ENCODE measurements at regions of chr16 and their contacts with region 1.

Region 1: DNA sequence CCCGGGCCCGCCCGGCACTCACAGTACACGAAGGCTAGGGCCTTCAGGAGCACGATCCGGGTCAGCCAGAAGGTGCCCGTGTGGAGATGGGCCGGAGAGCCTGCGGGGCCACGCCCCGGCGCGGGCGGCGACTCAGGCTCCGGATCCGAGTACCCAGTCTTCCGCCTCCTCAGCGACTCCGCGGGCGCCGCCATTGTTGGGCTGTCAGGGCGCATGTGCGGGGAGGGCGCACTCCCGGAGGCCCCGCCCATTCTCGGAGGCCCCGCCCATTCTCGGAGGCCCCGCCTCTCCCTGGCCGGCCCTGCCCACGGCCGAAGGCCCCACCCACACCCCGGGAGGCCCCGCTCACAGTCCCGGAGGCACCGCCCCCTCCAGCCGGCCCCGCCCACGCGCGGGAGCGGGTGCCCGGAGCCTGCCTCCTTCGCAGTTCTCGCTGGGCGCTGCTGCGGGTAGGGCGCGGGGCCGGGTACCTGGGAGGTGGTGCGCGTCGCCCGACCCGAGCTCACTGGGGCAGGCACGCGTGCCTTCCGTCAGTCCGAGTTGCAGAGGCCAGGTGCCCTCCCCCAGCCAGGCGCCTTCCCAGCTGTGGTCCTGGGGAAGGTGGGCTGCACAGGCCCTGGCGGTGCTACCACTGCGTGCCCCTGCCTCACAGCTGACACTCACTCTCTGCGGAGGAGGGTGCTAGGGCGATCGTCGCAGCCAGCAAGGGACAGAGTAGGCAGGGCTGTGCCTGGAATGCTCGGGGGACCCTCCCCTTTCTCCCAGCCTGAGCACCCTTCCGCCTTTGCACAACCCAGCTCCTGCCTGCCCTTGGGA is at the start of gene LMF1:
- DNase-seq: peak; percentile 98
- ATAC-seq: peak; percentile 93
- H3K4me3 Mint-ChIP-seq: peak within 1 kb of the TSS; percentile 76
- H3K27ac Mint-ChIP-seq: peak within 1 kb of the TSS; percentile 78
- H3K4me1 Mint-ChIP-seq: peaks cover 15% of the 10 kb centered on the region
- H3K27me3 Mint-ChIP-seq: no peaks in the 10 kb centered on the region
- total RNA-seq, gene LMF1: 9.5 to 12.2 TPM

Region 2: GRCh38 chr16:720990-721764 is 249.8 kb before region 1 on chr16 and contains the start of gene ANTKMT:
- CTCF ChIA-PET with region 1: no interaction called
- POLR2A ChIA-PET with region 1: no interaction called
- intact Hi-C with region 1: no loop called
- DNase-seq: peak; percentile 86
- ATAC-seq: peak; percentile 72
- H3K4me3 Mint-ChIP-seq: peak within 1 kb of the TSS; percentile 76
- H3K27ac Mint-ChIP-seq: peak within 1 kb of the TSS; percentile 78
- H3K4me1 Mint-ChIP-seq: peaks cover 16% of the 10 kb centered on the region
- H3K27me3 Mint-ChIP-seq: peaks cover 3% of the 10 kb centered on the region
- total RNA-seq, gene ANTKMT: 13.3 to 27.0 TPM

Region 3: GRCh38 chr16:740764-741505 is 230.0 kb before region 1 on chr16 and contains the start of gene CIAO3:
- CTCF ChIA-PET with region 1: no interaction called
- POLR2A ChIA-PET with region 1: no interaction called
- intact Hi-C with region 1: loop called in 1 of 2 experiments (anchors 1 kb)
- DNase-seq: peak; percentile 96
- ATAC-seq: peak; percentile 72
- H3K4me3 Mint-ChIP-seq: peak within 1 kb of the TSS; percentile 76
- H3K27ac Mint-ChIP-seq: peak within 1 kb of the TSS; percentile 51
- H3K4me1 Mint-ChIP-seq: peaks cover 22% of the 10 kb centered on the region
- H3K27me3 Mint-ChIP-seq: no peaks in the 10 kb centered on the region
- total RNA-seq, gene CIAO3: 28.3 to 31.9 TPM

Region 4: GRCh38 chr16:807347-808084 is 163.5 kb before region 1 on chr16:
- CTCF ChIA-PET with region 1: no interaction called
- POLR2A ChIA-PET with region 1: no interaction called
- intact Hi-C with region 1: loop called in 1 of 2 experiments (anchors 5 kb)
- DNase-seq: peak; percentile 93
- ATAC-seq: peak; percentile 98
- H3K4me3 Mint-ChIP-seq: peak overlapping the region; percentile 96
- H3K27ac Mint-ChIP-seq: peak overlapping the region; percentile 95
- H3K4me1 Mint-ChIP-seq: peaks cover 8% of the 10 kb centered on the region
- H3K27me3 Mint-ChIP-seq: peaks cover 4% of the 10 kb centered on the region

Region 5: GRCh38 chr16:981695-982144 is 10.7 kb after region 1 on chr16 and contains the start of gene SOX8:
- CTCF ChIA-PET with region 1: no interaction called
- POLR2A ChIA-PET with region 1: interaction called, 3 read pairs
- intact Hi-C with region 1: loop called in 1 of 2 experiments (anchors 1 kb)
- DNase-seq: no peak
- ATAC-seq: no peak
- H3K4me3 Mint-ChIP-seq: peak within 1 kb of the TSS; percentile 74
- H3K27ac Mint-ChIP-seq: no peak within 1 kb of the TSS
- H3K4me1 Mint-ChIP-seq: peaks cover 12% of the 10 kb centered on the region
- H3K27me3 Mint-ChIP-seq: peaks cover 4% of the 10 kb centered on the region
- total RNA-seq, gene SOX8: 1.4 to 1.6 TPM

Region 6: GRCh38 chr16:1002399-1003161 is 31.6 kb after region 1 on chr16:
- CTCF ChIA-PET with region 1: interaction called, 3 read pairs
- POLR2A ChIA-PET with region 1: no interaction called
- intact Hi-C with region 1: loop called in 1 of 2 experiments (anchors 1 kb)
- DNase-seq: peak; percentile 92
- ATAC-seq: peak; percentile 69
- H3K4me3 Mint-ChIP-seq: peak overlapping the region; percentile 26
- H3K27ac Mint-ChIP-seq: no peak overlapping the region
- H3K4me1 Mint-ChIP-seq: peaks cover 53% of the 10 kb centered on the region
- H3K27me3 Mint-ChIP-seq: no peaks in the 10 kb centered on the region

Region 7: DNA sequence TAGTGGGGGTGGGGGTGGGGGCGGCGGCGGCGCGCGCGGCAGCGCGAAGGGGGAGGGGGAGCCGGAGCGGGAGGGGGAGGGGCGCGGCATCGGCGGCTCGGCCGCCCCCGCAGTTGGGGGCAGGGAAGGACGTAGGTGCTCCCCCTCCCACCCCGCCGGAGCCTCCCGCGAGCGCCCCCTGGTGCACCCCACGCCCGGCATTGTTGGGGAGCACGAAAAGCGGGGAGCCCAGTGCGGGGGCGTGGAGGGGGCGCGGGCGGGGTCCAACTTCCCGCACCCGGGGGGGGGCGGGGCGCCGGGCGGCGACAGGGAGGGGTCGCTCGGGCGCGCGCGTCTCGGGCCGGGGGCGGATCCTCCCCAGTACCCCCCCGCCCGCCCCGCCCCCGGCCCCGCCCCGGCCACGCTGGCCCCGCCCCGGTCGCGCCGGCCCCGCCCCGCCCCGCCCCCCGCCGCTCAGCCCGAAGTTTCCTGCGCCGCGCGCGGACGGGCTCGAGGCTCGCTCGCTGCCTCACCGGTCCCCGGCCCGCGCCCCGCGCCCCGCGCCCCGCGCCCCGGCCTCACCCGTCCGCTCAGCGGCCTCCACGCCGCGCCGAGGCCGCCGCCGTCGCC is 181.8 kb after region 1 on chr16 and contains the start of gene CACNA1H:
- CTCF ChIA-PET with region 1: no interaction called
- POLR2A ChIA-PET with region 1: no interaction called
- intact Hi-C with region 1: loop called in 1 of 2 experiments (anchors 1 kb)
- DNase-seq: peak; percentile 82
- ATAC-seq: peak; percentile 68
- H3K4me3 Mint-ChIP-seq: peak within 1 kb of the TSS; percentile 41
- H3K27ac Mint-ChIP-seq: no peak within 1 kb of the TSS
- H3K4me1 Mint-ChIP-seq: peaks cover 2% of the 10 kb centered on the region
- H3K27me3 Mint-ChIP-seq: peaks cover 7% of the 10 kb centered on the region
- total RNA-seq, gene CACNA1H: 0.86 to 0.98 TPM

Region 8: GRCh38 chr16:1300664-1301476 is 329.9 kb after region 1 on chr16:
- CTCF ChIA-PET with region 1: no interaction called
- POLR2A ChIA-PET with region 1: no interaction called
- intact Hi-C with region 1: loop called in 1 of 2 experiments (anchors 2 kb)
- DNase-seq: peak; percentile 87
- ATAC-seq: peak; percentile 60
- H3K4me3 Mint-ChIP-seq: no peak overlapping the region
- H3K27ac Mint-ChIP-seq: no peak overlapping the region
- H3K4me1 Mint-ChIP-seq: peaks cover 27% of the 10 kb centered on the region
- H3K27me3 Mint-ChIP-seq: peaks cover 5% of the 10 kb centered on the region

Measured in activated CD4-positive, alpha-beta T cell treated with anti-CD3 and anti-CD28 coated beads for 36 hours (primary cell).